ENCODE measurements at regions of chrX and their contacts with region 1.

Region 1: GRCh38 chrX:112913807-112914206 is 73.2 kb upstream of the AMOT start:
- DNase-seq: no peak
- H3K4me3 ChIP-seq: no peak overlapping the region
- H3K27ac ChIP-seq: no peak overlapping the region
- H3K4me1 ChIP-seq: no peaks in the 10 kb centered on the region
- H3K27me3 ChIP-seq: no peaks in the 10 kb centered on the region
- CTCF ChIP-seq: no peak

Region 2: GRCh38 chrX:111823128-111823527 is 1090.7 kb before region 1 on chrX:
- CTCF ChIA-PET with region 1: no interaction called
- dilution Hi-C with region 1: no loop called
- in situ Hi-C with region 1: no loop called
- intact Hi-C with region 1: no loop called
- DNase-seq: no peak
- H3K4me3 ChIP-seq: no peak overlapping the region
- H3K27ac ChIP-seq: no peak overlapping the region
- H3K4me1 ChIP-seq: no peaks in the 10 kb centered on the region
- H3K27me3 ChIP-seq: peaks cover 2% of the 10 kb centered on the region
- CTCF ChIP-seq: peak; percentile 22 to 36

Region 3: GRCh38 chrX:112819010-112819640 is 94.7 kb before region 1 on chrX:
- CTCF ChIA-PET with region 1: no interaction called
- dilution Hi-C with region 1: no loop called
- in situ Hi-C with region 1: no loop called
- intact Hi-C with region 1: no loop called
- DNase-seq: peak; percentile 8
- H3K4me3 ChIP-seq: no peak overlapping the region
- H3K27ac ChIP-seq: no peak overlapping the region
- H3K4me1 ChIP-seq: no peaks in the 10 kb centered on the region
- H3K27me3 ChIP-seq: peaks cover 1% of the 10 kb centered on the region
- CTCF ChIP-seq: no peak

Region 4: GRCh38 chrX:112832481-112833100 is 81.2 kb before region 1 on chrX:
- CTCF ChIA-PET with region 1: no interaction called
- dilution Hi-C with region 1: no loop called
- in situ Hi-C with region 1: no loop called
- intact Hi-C with region 1: no loop called
- DNase-seq: peak; percentile 22
- H3K4me3 ChIP-seq: no peak overlapping the region
- H3K27ac ChIP-seq: no peak overlapping the region
- H3K4me1 ChIP-seq: no peaks in the 10 kb centered on the region
- H3K27me3 ChIP-seq: no peaks in the 10 kb centered on the region
- CTCF ChIP-seq: no peak

Region 5: GRCh38 chrX:112889400-112889799 is 24.4 kb before region 1 on chrX:
- CTCF ChIA-PET with region 1: interaction called, 10 read pairs
- dilution Hi-C with region 1: no loop called
- in situ Hi-C with region 1: no loop called
- intact Hi-C with region 1: no loop called
- DNase-seq: no peak
- H3K4me3 ChIP-seq: no peak overlapping the region
- H3K27ac ChIP-seq: no peak overlapping the region
- H3K4me1 ChIP-seq: no peaks in the 10 kb centered on the region
- H3K27me3 ChIP-seq: no peaks in the 10 kb centered on the region
- CTCF ChIP-seq: no peak

Region 6: DNA sequence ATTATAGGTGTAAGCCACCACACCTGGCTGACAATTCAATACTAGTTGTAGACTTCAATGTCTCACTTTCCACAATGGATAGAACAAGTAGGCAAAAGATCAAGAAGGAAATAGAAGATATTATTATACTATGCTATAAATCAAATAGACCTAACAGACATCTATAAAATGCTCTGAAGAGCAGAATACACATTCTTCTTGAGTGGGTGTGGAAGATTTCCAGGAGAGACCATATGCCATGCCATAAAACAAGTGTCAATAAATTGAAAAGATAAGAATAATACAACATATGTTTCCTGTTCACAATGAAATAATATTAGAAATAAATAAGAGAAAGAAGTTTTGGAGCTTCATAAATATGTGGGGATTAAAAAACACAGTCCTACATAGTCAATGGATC is 106.2 kb after region 1 on chrX:
- CTCF ChIA-PET with region 1: no interaction called
- dilution Hi-C with region 1: no loop called
- in situ Hi-C with region 1: no loop called
- intact Hi-C with region 1: no loop called
- DNase-seq: no peak
- H3K4me3 ChIP-seq: no peak overlapping the region
- H3K27ac ChIP-seq: no peak overlapping the region
- H3K4me1 ChIP-seq: no peaks in the 10 kb centered on the region
- H3K27me3 ChIP-seq: no peaks in the 10 kb centered on the region
- CTCF ChIP-seq: no peak

Measured in mammary epithelial cell (primary cell).